H1 (cell line): ENCODE measurements at regions of chr1 and their contacts with region 1.

Region 1: DNA sequence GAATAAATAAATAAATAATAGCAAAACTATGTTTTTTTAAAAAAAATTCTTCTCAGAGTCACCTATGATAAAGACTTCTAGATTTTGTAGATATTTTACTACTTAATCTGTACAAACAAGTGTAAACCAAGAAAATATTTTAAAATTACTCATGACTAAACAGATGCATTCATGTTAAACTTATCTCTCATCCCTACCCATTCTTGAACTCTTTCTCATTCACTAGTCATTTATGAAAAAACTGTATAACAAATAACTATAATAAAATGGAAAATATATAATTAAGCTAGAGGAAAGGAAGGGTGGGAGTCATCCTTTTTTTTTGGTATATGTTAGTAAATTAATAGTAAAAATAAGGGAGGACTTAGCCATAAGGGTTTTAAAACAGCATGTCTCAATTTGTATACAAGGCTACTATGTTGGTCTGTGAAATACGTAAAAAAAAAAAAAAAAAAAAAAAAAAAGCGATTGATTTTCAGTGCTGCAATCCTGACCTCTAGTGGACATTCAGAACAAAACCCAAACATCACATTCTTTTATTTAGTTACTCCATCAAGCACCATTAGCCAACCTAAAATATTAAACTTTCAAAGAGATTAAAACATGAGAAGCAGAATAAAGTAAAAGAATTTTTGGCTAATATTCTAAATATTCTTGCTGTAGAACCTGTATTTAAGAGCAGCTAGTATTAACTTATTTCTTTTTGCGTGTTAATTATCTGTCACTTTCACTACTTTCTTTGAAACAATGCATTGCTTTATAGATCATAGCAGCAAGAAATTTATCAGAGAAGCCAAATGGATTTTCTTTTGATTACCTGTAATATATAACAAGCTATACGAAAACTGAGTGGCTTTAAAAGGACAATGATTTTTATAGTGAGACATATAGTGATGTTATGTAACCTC is 255.8 kb upstream of the CACYBP start:
- DNase-seq: no peak
- H3K4me3 ChIP-seq: no peak overlapping the region
- H3K27ac ChIP-seq: no peak overlapping the region
- H3K4me1 ChIP-seq: no peaks in the 10 kb centered on the region
- H3K27me3 ChIP-seq: no peaks in the 10 kb centered on the region
- CTCF ChIP-seq: peak in 2 of 3 experiments; percentile 47 to 48; a peak in 2 of 4 replicates
- EP300 ChIP-seq: no peak
- POLR2A ChIP-seq: no peak
- RAD21 ChIP-seq: peak; percentile 76 to 88

Region 2: GRCh38 chr1:174726167-174726879 is 17.6 kb before region 1 on chr1:
- CTCF ChIA-PET with region 1: interaction called, 18 read pairs
- POLR2A ChIA-PET with region 1: no interaction called
- DNase-seq: no peak
- H3K4me3 ChIP-seq: no peak overlapping the region
- H3K27ac ChIP-seq: no peak overlapping the region
- H3K4me1 ChIP-seq: peaks cover 0 to 7% (median 2%) of the 10 kb centered on the region in 4 experiments; a peak in 2 of 7 replicates
- H3K27me3 ChIP-seq: no peaks in the 10 kb centered on the region
- CTCF ChIP-seq: peak in 2 of 3 experiments; percentile 24 to 32; a peak in 2 of 4 replicates
- EP300 ChIP-seq: no peak
- POLR2A ChIP-seq: no peak
- RAD21 ChIP-seq: peak in 1 of 2 experiments; percentile 56